Calu3 (cell line): ENCODE measurements at regions of chr18 and their contacts with region 1.

Region 1: DNA sequence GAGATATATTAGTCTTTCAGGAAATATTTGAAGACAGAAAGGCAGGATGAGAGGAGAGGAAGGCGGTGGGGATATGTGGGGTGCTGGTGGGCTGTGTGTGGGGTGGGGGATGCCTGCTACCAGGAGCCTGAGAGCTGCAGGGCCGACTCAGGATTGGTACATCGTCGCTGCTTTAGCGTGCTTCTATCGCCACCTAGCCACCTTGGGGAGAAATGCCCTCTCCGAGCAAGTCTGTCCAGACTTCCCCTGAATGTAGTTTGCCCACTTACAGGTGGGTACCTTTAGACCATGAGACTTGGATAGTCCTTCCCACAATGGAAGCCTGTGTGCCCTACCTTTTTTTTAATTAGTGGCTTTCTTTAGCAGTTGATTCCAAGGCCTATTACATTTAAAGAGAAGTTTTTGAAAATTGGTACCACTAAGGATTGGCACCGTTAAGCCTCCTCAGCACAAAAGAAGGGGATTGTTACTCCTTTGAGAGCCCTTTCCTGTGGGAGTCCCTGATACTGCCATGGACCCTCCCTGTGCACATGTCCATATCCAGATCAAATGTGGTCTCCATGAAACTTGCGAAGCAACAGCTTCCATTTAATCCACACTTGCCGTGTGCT is 114.1 kb upstream of the NDUFV2 start:
- DNase-seq: peak; percentile 69
- H3K4me3 Mint-ChIP-seq: no peak overlapping the region
- H3K27ac Mint-ChIP-seq: no peak overlapping the region
- H3K4me1 Mint-ChIP-seq: peaks cover 18% of the 10 kb centered on the region
- H3K27me3 Mint-ChIP-seq: no peaks in the 10 kb centered on the region
- CTCF ChIP-seq: peak; percentile 89

Region 2: GRCh38 chr18:8654503-8655451 is 333.6 kb before region 1 on chr18:
- CTCF ChIA-PET with region 1: interaction called, 4 read pairs
- intact Hi-C with region 1: loop called (anchors 1 kb)
- DNase-seq: no peak
- H3K4me3 Mint-ChIP-seq: no peak overlapping the region
- H3K27ac Mint-ChIP-seq: no peak overlapping the region
- H3K4me1 Mint-ChIP-seq: no peaks in the 10 kb centered on the region
- H3K27me3 Mint-ChIP-seq: no peaks in the 10 kb centered on the region
- CTCF ChIP-seq: peak; percentile 59

Region 3: DNA sequence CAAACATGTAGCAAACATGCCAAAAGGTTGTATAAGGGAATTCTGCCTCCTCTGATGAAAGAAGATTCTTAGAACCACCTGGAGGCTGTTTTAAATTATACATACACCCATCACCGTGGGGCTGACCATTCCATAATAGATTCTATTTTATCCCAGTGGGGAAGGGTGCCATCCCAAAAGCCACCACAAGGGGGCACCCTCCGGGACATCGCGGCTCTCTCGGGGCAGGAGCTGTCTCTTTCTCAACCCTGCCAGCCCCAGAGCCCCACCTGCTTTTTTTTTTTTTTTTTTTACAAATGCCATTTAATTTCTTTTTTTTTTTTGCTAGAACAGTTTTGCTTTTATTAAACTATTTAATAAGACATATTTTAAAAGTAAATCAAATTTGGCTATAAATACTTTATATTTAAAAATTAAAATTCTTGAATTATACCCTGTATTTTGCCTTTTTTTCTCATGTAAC is 291.6 kb before region 1 on chr18:
- CTCF ChIA-PET with region 1: interaction called, 13 read pairs
- intact Hi-C with region 1: loop called (anchors 2 kb)
- DNase-seq: peak; percentile 91
- H3K4me3 Mint-ChIP-seq: no peak overlapping the region
- H3K27ac Mint-ChIP-seq: no peak overlapping the region
- H3K4me1 Mint-ChIP-seq: peaks cover 7% of the 10 kb centered on the region
- H3K27me3 Mint-ChIP-seq: no peaks in the 10 kb centered on the region
- CTCF ChIP-seq: peak; percentile 93

Region 4: GRCh38 chr18:8747440-8747937 is 240.9 kb before region 1 on chr18:
- CTCF ChIA-PET with region 1: no interaction called
- intact Hi-C with region 1: no loop called
- DNase-seq: peak; percentile 42
- H3K4me3 Mint-ChIP-seq: peak overlapping the region; percentile 57
- H3K27ac Mint-ChIP-seq: peak overlapping the region; percentile 90
- H3K4me1 Mint-ChIP-seq: peaks cover 81% of the 10 kb centered on the region
- H3K27me3 Mint-ChIP-seq: no peaks in the 10 kb centered on the region
- CTCF ChIP-seq: no peak

Region 5: DNA sequence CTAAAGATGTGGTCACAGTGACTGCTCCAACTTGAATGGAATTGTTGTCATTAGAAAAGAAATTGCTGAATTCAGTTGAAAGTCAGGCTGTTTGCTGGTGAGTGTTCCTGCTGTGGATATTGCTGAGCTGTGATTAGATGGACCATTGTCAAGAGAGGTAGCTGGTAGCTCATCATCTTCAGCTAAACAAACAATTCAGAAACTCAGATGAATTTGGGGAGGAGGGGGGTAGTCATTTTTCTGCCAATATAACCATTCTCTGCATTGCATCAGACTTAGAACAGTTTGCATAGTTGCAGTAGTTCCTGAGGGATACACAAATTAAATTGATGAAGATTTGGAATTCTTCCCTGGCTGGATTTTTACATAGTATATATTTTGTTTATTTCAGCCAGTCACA is 174.8 kb before region 1 on chr18:
- CTCF ChIA-PET with region 1: no interaction called
- intact Hi-C with region 1: no loop called
- DNase-seq: no peak
- H3K4me3 Mint-ChIP-seq: no peak overlapping the region
- H3K27ac Mint-ChIP-seq: no peak overlapping the region
- H3K4me1 Mint-ChIP-seq: peaks cover 21% of the 10 kb centered on the region
- H3K27me3 Mint-ChIP-seq: no peaks in the 10 kb centered on the region
- CTCF ChIP-seq: no peak

Region 6: GRCh38 chr18:9025091-9025838 is 36.9 kb after region 1 on chr18:
- CTCF ChIA-PET with region 1: no interaction called
- intact Hi-C with region 1: no loop called
- DNase-seq: no peak
- H3K4me3 Mint-ChIP-seq: no peak overlapping the region
- H3K27ac Mint-ChIP-seq: no peak overlapping the region
- H3K4me1 Mint-ChIP-seq: no peaks in the 10 kb centered on the region
- H3K27me3 Mint-ChIP-seq: no peaks in the 10 kb centered on the region
- CTCF ChIP-seq: no peak

Region 7: DNA sequence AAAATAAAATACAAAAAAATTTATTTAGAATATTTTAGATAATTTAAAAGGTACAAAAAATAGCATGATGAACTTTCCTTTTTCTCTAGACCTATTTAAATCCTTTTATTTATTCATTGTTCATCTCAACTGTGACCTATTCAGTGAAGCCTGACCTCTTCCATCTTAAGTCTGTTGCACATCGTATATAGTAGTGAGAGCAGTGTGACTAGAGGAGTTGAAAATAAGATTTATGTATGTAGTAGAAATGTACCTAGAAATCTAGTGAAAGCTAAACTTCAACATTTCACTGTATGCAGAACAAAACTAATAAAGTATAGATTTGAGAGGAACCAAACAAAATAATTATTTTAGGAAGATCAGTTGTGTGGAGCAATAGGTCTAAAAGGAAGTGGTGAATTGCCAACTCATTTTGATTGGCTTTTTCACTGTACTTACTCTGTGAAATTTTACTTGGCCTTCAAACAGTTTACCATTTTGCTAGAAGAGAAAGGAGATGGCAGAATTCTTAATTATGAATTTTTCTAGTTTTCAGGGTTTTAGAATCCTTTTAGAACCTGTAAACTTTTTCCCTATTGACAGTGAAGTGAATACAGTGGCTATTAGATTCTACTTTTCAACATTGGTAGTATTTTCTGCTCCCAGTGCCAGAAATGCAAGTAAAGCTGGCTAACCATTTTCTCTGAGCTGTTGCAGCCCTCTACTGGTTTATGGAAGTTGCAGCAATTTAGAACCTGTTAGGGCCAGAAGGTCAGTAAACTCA is 159.3 kb after region 1 on chr18:
- CTCF ChIA-PET with region 1: no interaction called
- intact Hi-C with region 1: loop called (anchors 10 kb)
- DNase-seq: peak; percentile 39
- H3K4me3 Mint-ChIP-seq: no peak overlapping the region
- H3K27ac Mint-ChIP-seq: no peak overlapping the region
- H3K4me1 Mint-ChIP-seq: peaks cover 31% of the 10 kb centered on the region
- H3K27me3 Mint-ChIP-seq: no peaks in the 10 kb centered on the region
- CTCF ChIP-seq: peak; percentile 61